Activated CD8-positive, alpha-beta memory T cell treated with anti-CD3 and anti-CD28 coated beads, Interleukin-2, amount 10 ng/mL, durations not matched to agents 7 days and 5 days (primary cell): ENCODE measurements at regions of chr1 and their contacts with region 1.

Region 1: DNA sequence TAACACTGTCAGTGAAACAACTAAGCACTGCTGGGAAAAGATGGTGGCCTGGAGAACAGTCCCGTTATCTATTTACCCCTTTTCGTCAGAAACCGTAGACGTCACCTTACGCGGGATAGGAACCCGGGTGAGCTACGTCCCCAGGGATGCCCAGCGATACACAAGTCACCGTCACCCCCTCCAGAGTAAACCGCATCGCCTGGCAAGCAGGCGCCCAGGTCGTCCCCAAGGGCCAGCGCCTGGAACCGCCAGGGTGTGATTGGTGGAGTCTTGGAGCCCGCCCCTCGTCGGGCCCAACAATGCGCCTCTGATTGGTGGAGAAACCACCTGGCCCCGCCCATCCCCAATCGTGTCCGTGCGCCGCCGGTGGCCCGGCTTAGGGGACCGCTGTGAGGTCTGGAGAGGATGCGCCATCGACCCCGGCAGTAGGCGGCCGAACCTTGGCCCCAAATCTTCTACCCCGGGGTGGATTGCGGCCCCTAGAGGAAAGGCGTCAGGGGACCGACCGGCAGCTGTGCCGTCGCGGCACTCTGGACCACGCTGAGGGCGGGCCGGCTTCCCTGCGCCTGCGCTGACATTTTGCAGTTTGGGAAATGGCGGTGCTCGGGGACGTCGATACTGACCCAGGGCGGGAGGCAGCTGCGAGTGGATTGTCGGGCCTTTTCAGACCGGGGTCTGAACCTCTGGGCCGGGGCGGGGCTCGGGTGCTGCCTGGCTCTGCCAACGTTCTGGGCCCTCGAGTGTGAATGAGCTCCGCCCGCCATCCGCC is 34.4 kb downstream of the SLC2A1 start:
- DNase-seq: peak; percentile 96
- ATAC-seq: peak; percentile 93
- H3K4me3 Mint-ChIP-seq: peak overlapping the region; percentile 86
- H3K27ac Mint-ChIP-seq: peak overlapping the region; percentile 88
- H3K4me1 Mint-ChIP-seq: peaks cover 48% of the 10 kb centered on the region
- H3K27me3 Mint-ChIP-seq: no peaks in the 10 kb centered on the region

Region 2: GRCh38 chr1:42913426-42914091 is 10.7 kb before region 1 on chr1:
- CTCF ChIA-PET with region 1: interaction called, 27 read pairs
- DNase-seq: peak; percentile 76
- ATAC-seq: peak; percentile 75
- H3K4me3 Mint-ChIP-seq: no peak overlapping the region
- H3K27ac Mint-ChIP-seq: no peak overlapping the region
- H3K4me1 Mint-ChIP-seq: peaks cover 10% of the 10 kb centered on the region
- H3K27me3 Mint-ChIP-seq: peaks cover 2% of the 10 kb centered on the region

Region 3: DNA sequence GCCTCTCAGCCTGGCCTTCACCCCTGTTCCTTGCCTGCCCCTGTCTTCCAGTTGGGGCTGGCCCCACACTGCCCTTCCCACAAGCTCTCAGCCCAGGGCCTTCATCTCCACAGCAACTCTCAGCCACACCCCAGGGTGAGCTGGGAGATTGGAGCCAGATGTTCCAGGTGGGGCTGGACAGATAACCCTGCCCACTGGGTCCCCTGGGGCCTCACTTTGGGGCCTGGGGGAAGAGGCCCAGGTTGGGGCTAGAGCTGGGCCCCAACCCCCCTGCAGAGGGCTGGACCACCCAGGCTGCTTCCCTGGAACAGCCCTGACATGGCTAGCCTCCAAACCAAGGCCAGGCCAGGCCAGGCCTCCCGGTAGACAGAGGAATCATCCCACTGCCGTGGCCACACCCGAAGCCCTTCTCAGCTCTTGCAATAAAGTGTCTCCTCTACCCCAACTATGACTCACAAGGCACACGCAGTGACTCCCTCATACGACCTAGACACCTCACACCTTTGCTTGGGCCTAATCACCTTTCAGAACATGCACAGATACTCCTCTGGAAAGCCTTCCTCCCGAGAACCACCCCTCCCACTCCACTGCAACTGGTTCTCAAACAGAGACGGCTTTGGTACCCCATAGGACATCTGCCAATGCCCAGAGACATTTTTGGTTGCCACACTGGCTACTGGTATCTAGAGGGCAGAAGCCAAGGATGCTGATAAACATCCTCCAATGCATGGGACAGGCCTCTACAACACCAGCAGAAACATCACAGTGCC is 12.2 kb after region 1 on chr1:
- CTCF ChIA-PET with region 1: interaction called, 11 read pairs
- DNase-seq: peak; percentile 70
- ATAC-seq: peak; percentile 25
- H3K4me3 Mint-ChIP-seq: peak overlapping the region; percentile 51
- H3K27ac Mint-ChIP-seq: peak overlapping the region; percentile 96
- H3K4me1 Mint-ChIP-seq: peaks cover 97% of the 10 kb centered on the region
- H3K27me3 Mint-ChIP-seq: no peaks in the 10 kb centered on the region

Region 4: GRCh38 chr1:42958488-42959319 is 34.4 kb after region 1 on chr1 and contains the start of gene SLC2A1:
- CTCF ChIA-PET with region 1: interaction called, 52 read pairs
- DNase-seq: peak; percentile 98
- ATAC-seq: peak; percentile 87
- H3K4me3 Mint-ChIP-seq: peak within 1 kb of the TSS; percentile 95
- H3K27ac Mint-ChIP-seq: peak within 1 kb of the TSS; percentile 99
- H3K4me1 Mint-ChIP-seq: peaks cover 47% of the 10 kb centered on the region
- H3K27me3 Mint-ChIP-seq: peaks cover 8% of the 10 kb centered on the region
- total RNA-seq, gene SLC2A1: 113 to 140 TPM